ENCODE measurements at regions of chr12 and their contacts with region 1.

Region 1: GRCh38 chr12:44509471-44509870 is 366.6 kb downstream of the NELL2 start:
- DNase-seq: no peak
- H3K4me3 Mint-ChIP-seq: no peak overlapping the region
- H3K27ac Mint-ChIP-seq: no peak overlapping the region
- H3K4me1 Mint-ChIP-seq: no peaks in the 10 kb centered on the region
- H3K27me3 Mint-ChIP-seq: no peaks in the 10 kb centered on the region
- CTCF ChIP-seq: no peak

Region 2: DNA sequence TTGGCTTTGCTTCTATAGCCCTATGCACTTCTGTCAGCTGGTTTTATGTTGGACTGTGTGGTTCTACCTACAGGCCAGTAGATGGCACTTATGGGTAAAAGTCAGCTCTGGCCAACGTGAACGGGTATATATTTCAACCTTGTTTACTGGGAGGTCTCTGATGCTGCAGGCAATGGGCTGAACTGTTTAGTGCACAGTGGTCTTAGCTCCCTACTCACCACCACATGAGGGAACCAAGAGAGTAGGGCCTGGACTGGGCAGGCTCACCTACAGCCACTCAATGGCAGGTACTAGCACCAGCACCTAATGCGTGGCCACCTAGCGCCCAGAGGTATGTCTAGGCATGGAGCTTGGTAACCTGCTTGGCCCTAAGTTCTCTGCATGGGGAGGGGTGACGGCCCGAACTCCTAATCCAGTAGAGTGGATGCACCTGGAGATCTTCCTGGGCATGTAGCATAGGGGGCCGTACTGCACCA is 191.8 kb before region 1 on chr12:
- CTCF ChIA-PET with region 1: no interaction called
- intact Hi-C with region 1: loop called (anchors 5 kb)
- DNase-seq: peak; percentile 5
- H3K4me3 Mint-ChIP-seq: no peak overlapping the region
- H3K27ac Mint-ChIP-seq: no peak overlapping the region
- H3K4me1 Mint-ChIP-seq: no peaks in the 10 kb centered on the region
- H3K27me3 Mint-ChIP-seq: no peaks in the 10 kb centered on the region
- CTCF ChIP-seq: peak; percentile 41

Region 3: DNA sequence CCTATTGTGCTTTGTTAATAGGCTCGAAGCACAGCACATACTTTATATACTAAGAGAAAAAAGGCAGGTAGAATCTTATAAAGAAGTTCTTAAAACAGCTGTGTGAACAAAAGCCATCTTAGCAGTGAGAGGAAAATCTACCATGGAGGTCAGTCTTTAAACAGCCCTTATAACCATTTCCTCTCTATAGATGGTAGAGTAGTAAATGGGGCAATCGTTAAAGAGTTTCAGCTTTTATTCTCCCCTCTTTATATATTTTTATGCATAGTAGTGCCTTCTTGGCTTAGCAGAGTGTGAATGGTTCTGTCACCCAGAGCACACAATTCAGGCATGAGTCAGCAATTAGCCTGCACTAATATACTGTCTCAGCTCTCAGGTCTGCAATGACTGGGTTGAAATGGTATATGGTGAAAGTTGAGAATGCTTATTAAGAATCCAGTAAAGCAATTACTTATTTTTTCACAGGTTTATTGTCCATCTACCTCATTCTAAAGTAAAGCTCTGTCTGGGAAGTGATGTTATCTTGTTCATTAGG is 61.6 kb after region 1 on chr12:
- CTCF ChIA-PET with region 1: interaction called, 12 read pairs
- intact Hi-C with region 1: no loop called
- DNase-seq: no peak
- H3K4me3 Mint-ChIP-seq: no peak overlapping the region
- H3K27ac Mint-ChIP-seq: no peak overlapping the region
- H3K4me1 Mint-ChIP-seq: no peaks in the 10 kb centered on the region
- H3K27me3 Mint-ChIP-seq: no peaks in the 10 kb centered on the region
- CTCF ChIP-seq: no peak

Measured in Calu3 (cell line).